Activated B cell treated with CpG ODN at 0.5 μM for 24 hours (primary cell): ENCODE measurements at regions of chr19 and their contacts with region 1.

Region 1: DNA sequence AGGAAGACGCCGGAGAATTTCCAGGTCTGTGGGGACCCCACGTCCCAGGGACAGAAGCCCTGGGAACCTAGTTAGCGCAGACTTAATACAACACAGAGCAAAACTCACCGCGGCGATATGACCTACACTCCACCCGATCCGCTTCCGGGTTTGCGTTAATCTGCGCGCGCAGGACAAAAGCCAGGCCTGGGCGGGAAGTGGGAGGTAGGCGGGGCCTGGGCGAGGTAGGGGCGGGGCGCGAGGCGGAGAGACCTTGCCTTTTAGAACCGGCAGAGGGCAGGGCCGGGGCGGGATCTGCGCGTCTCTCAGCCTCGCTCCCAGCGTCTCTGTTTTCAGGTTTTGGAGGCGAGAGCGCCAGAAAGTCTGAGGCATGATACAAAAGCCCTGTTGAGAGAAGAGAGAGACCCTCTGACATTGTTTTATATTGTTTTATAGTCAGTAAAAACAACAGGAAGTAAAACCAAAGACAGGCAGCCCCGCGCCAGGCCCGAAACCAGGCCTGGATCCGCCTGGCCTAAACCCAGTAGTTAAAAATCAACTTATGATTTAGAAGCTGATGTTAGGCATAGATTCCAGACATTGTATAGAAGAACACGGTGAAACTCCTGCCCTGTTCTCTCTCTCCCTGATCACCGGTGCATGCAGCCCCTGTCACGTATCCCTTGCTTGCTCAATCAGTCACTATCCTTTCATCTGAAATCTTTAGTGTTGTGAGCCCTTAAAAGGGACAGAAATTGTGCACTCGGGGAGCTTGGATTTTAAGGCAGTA is at the start of gene ZNF611:
- DNase-seq: peak; percentile 99
- ATAC-seq: peak; percentile 97
- H3K4me3 Mint-ChIP-seq: peak within 1 kb of the TSS; percentile 92
- H3K27ac Mint-ChIP-seq: peak within 1 kb of the TSS; percentile 88
- H3K4me1 Mint-ChIP-seq: peaks cover 21% of the 10 kb centered on the region
- H3K27me3 Mint-ChIP-seq: no peaks in the 10 kb centered on the region
- CTCF ChIP-seq: no peak
- total RNA-seq, gene ZNF611: 33.5 and 41.9 TPM in 2 replicates

Region 2: GRCh38 chr19:52139252-52140031 is 595.6 kb before region 1 on chr19 and contains the start of gene ZNF616:
- CTCF ChIA-PET with region 1: no interaction called
- POLR2A ChIA-PET with region 1: no interaction called
- intact Hi-C with region 1: loop called (anchors 1 kb)
- DNase-seq: peak; percentile 74
- ATAC-seq: peak; percentile 59
- H3K4me3 Mint-ChIP-seq: peak within 1 kb of the TSS; percentile 97
- H3K27ac Mint-ChIP-seq: peak within 1 kb of the TSS; percentile 93
- H3K4me1 Mint-ChIP-seq: peaks cover 25% of the 10 kb centered on the region
- H3K27me3 Mint-ChIP-seq: no peaks in the 10 kb centered on the region
- CTCF ChIP-seq: no peak
- total RNA-seq, gene ZNF616: 7.3 and 7.4 TPM in 2 replicates

Region 3: GRCh38 chr19:52336117-52336790 is 398.8 kb before region 1 on chr19 and contains the start of gene ZNF610:
- CTCF ChIA-PET with region 1: no interaction called
- POLR2A ChIA-PET with region 1: no interaction called
- intact Hi-C with region 1: loop called (anchors 1 kb)
- DNase-seq: peak; percentile 84
- ATAC-seq: peak; percentile 96
- H3K4me3 Mint-ChIP-seq: peak within 1 kb of the TSS; percentile 97
- H3K27ac Mint-ChIP-seq: peak within 1 kb of the TSS; percentile 93
- H3K4me1 Mint-ChIP-seq: peaks cover 14% of the 10 kb centered on the region
- H3K27me3 Mint-ChIP-seq: no peaks in the 10 kb centered on the region
- CTCF ChIP-seq: no peak
- total RNA-seq, gene ZNF610: 1.1 and 2.0 TPM in 2 replicates

Region 4: DNA sequence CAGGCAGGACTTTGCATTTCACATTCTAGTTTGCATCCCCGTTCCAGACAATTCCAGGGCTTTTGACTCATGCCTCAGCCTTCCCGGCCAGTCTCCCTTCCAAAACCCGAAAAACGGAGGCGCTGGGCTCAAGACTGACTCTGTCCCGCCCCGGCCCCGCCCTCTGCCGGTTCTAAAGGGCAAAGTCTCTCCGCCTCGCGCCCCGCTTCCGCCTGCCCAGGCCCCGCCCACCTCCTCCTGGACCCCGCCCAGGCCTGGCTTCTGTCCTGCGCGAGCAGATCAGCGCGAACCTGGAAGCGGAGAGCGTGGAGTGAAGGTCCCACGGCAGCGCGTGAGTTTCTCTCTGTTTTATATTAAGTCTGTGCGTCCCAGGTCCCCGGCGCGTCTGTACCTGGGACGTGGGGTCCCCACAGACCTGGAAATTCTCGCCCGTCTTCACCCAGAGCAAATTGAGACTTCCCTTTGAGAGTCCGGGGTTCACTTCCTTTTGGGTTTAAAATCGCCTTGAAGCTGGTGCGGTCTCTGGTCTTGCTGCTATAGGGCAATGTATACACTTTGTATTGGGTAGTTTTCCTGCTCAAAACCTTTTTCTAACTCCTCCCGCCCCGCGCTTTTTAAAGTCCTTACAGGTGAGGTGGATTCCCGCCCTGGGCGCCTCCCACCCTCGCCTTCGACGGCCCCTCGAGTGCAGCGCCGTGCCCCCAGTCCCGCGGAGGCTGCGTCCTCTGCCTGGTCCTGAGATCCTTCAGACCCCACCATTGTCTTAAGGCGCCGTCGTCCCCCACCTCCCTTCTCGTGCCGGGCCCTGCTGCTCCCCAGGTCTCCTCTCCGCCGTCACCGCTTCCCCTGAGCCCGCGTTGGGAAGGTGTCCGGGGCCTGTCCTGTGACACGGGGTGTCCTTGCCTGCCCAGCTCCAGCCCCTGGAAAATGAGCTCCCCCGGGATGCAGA is 133.8 kb before region 1 on chr19:
- CTCF ChIA-PET with region 1: no interaction called
- POLR2A ChIA-PET with region 1: no interaction called
- intact Hi-C with region 1: loop called (anchors 1 kb)
- DNase-seq: peak; percentile 95
- ATAC-seq: peak; percentile 99
- H3K4me3 Mint-ChIP-seq: peak overlapping the region; percentile 93
- H3K27ac Mint-ChIP-seq: peak overlapping the region; percentile 86
- H3K4me1 Mint-ChIP-seq: peaks cover 26% of the 10 kb centered on the region
- H3K27me3 Mint-ChIP-seq: no peaks in the 10 kb centered on the region
- CTCF ChIP-seq: no peak

Region 5: GRCh38 chr19:52690369-52691214 is 44.5 kb before region 1 on chr19:
- CTCF ChIA-PET with region 1: no interaction called
- POLR2A ChIA-PET with region 1: no interaction called
- intact Hi-C with region 1: loop called (anchors 2 kb)
- DNase-seq: peak; percentile 88
- ATAC-seq: peak; percentile 97
- H3K4me3 Mint-ChIP-seq: peak overlapping the region; percentile 98
- H3K27ac Mint-ChIP-seq: peak overlapping the region; percentile 93
- H3K4me1 Mint-ChIP-seq: peaks cover 36% of the 10 kb centered on the region
- H3K27me3 Mint-ChIP-seq: no peaks in the 10 kb centered on the region
- CTCF ChIP-seq: no peak

Region 6: DNA sequence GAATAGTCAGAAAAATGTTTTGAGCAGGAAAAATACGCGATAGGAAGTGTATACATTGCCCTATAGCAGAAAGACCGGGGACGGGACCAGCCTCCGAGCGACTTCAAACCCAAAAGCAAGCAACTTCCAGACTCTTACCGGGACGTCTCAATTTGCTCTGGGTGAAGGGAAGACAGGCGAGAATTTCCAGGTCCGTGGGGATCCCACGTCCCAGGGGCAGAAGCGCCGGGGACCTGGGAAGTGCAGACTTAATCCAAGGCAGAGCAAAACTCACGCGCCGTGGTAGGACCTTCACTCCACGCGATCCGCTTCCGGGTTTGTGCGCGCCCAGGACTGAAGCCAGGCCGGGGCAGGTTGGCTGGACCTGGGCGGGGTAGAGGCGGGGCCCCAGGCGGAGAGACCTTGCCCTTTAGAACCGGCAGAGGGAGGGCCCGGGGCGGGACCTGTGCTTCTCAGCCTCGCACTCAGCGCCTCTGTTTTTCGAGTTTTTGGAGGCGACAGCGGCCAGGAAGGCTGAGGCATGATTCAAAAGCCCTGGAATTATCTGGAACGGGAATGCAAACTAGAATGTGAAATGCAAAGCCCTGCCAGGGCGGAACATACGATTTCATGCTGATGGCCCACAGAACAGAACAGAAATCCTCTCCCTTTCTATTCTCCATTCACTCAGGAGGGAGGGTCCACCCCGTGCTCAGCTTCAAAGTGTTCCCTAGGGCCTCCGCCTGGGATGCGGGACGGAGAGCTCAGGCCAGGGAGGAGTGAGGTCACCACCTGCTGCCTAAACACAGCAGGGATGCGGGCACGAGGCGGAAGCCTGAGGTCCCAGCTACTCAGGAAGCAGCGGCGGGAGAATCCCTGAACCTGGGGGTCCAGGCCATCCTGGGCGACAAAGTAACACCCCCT is 51.6 kb after region 1 on chr19 and contains the start of gene ZNF600:
- CTCF ChIA-PET with region 1: no interaction called
- POLR2A ChIA-PET with region 1: no interaction called
- intact Hi-C with region 1: loop called (anchors 1 kb)
- DNase-seq: peak; percentile 88
- ATAC-seq: peak; percentile 99
- H3K4me3 Mint-ChIP-seq: peak within 1 kb of the TSS; percentile 96
- H3K27ac Mint-ChIP-seq: peak within 1 kb of the TSS; percentile 90
- H3K4me1 Mint-ChIP-seq: peaks cover 36% of the 10 kb centered on the region
- H3K27me3 Mint-ChIP-seq: no peaks in the 10 kb centered on the region
- CTCF ChIP-seq: no peak
- total RNA-seq, gene ZNF600: 25.2 and 30.5 TPM in 2 replicates

Region 7: DNA sequence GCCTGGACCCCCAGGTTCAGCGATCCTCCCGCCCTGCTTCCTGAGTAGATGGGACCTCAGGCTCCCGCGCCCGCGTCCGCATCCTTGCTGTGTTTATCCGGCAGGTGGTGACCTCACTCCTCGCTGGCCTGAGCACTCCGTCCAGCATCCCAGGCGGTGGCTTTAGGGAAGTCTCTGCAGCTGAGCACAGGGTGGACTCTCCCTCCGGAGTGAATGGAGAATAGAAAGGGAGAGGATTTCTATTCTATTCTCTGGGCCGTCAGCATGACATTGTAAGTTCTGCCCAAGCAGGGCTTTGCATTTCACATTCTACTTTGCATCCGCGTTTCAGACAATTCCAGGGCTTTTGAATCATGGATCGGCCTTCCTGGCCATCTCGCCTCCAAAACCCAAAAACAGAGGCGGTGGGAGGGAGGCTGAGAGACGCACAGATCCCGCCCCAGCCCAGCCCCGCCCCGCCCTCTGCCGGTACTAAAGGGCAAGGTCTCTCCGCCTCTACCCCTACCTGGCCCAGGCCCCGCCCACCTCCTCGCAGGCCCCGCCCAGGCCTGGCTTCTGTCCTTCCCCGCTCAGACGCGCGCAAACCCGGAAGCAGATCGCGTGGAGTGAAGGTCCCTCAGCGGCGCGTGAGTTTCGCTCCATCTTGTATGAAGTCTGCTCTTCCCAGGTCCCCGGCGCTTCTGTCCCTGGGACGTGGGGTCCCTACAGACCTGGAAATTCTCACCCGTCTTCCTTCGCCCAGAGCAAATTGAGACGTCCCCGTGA is 630.2 kb after region 1 on chr19 and contains the start of gene ZNF525:
- CTCF ChIA-PET with region 1: no interaction called
- POLR2A ChIA-PET with region 1: no interaction called
- intact Hi-C with region 1: loop called (anchors 1 kb)
- DNase-seq: peak; percentile 98
- ATAC-seq: peak; percentile 99
- H3K4me3 Mint-ChIP-seq: peak within 1 kb of the TSS; percentile 96
- H3K27ac Mint-ChIP-seq: peak within 1 kb of the TSS; percentile 98
- H3K4me1 Mint-ChIP-seq: peaks cover 34% of the 10 kb centered on the region
- H3K27me3 Mint-ChIP-seq: no peaks in the 10 kb centered on the region
- CTCF ChIP-seq: no peak
- total RNA-seq, gene ZNF525: 28.9 and 37.4 TPM in 2 replicates